ENCODE measurements at regions of chr6 and their contacts with region 1.

Region 1: DNA sequence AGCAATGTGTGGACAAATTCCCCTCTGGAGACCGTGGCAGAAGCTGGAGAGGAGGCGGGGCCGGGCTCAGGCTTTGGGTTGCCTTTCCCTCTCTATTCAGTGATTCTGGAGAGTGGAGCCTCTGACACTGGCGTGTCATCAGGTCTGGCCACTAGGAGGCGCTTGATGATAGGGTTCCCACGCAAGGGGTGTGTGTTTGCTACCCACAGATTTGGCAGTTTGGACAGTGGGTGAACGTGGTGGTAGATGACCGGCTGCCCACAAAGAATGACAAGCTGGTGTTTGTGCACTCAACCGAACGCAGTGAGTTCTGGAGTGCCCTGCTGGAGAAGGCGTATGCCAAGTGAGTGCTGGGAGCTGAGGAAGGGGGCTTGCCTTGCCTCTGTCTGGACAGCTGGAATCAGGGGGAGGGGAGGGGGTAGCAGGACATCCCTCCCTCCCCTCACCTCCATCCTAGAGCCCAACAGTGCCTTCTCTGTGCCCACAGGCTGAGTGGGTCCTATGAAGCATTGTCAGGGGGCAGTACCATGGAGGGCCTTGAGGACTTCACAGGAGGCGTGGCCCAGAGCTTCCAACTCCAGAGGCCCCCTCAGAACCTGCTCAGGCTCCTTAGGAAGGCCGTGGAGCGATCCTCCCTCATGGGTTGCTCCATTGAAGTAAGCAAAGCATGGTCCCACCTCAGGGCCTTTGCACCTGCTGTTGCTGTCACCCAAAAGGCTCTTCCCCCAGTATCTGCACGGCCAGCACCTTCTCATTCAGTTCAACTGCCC is 14.3 kb downstream of the CAPN11 start:
- DNase-seq: peak; percentile 62 to 87
- ATAC-seq: peak; percentile 94 to 97
- H3K4me3 ChIP-seq: no peak overlapping the region
- H3K27ac ChIP-seq: no peak overlapping the region
- H3K4me1 ChIP-seq: no peaks in the 10 kb centered on the region
- CTCF ChIP-seq: peak; percentile 72
- EP300 ChIP-seq: no peak
- POLR2A ChIP-seq: no peak
- RAD21 ChIP-seq: peak; percentile 82 to 89

Region 2: GRCh38 chr6:43817192-43817591 is 355.7 kb before region 1 on chr6:
- CTCF ChIA-PET with region 1: no interaction called
- POLR2A ChIA-PET with region 1: no interaction called
- DNase-seq: peak; percentile 62 to 66
- ATAC-seq: peak; percentile 97 to 100
- H3K4me3 ChIP-seq: no peak overlapping the region
- H3K27ac ChIP-seq: peak overlapping the region; percentile 63 to 80
- H3K4me1 ChIP-seq: peaks cover 5% of the 10 kb centered on the region; the same call in 2 of the 3 replicates
- CTCF ChIP-seq: peak; percentile 38; the same call in 2 of the 3 replicates
- EP300 ChIP-seq: no peak
- POLR2A ChIP-seq: no peak
- RAD21 ChIP-seq: peak; percentile 32 to 38; a peak in 2 of 5 replicates

Region 3: DNA sequence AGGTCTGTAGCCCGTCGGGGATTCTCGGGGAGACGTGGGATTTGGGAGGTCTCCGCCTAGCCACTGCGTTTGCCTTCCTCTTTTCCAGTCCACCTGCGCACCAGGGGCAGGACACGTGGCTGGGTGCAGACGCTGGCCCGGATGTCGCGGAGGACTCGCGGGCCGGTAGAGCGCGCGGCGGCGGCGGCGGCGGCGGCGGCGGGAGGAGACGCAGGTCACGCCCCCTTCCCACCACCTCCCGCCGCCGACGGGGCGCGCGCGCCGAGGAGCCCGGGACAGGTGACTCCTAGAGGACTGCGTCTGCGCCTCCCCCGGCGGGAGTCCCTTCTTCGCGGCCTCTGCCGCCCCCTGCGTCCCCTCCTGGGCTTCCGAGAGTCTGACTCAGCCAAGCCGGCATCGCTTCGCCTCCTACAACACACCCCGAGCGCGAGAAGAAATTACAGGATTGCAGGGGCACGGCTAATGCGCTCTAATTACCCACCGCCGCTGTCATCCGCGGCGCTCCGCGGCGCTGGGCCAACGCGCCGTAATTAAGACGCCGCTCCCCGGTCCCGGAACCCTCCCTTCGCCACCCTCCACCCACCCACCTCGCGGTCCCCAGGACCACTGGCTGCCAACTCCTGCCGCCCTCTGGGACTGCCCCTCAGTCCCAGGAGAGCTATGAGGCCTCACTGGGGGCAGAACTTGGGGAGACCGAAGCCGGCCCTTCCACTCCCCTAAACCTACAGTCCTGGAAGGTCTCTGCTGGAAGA is 170.1 kb before region 1 on chr6:
- CTCF ChIA-PET with region 1: no interaction called
- POLR2A ChIA-PET with region 1: no interaction called
- DNase-seq: peak; percentile 55 to 76
- ATAC-seq: peak; percentile 72
- H3K4me3 ChIP-seq: peak overlapping the region; percentile 60
- H3K27ac ChIP-seq: peak overlapping the region; percentile 100
- H3K4me1 ChIP-seq: peaks cover 68% of the 10 kb centered on the region
- CTCF ChIP-seq: no peak
- EP300 ChIP-seq: no peak
- POLR2A ChIP-seq: no peak; the same call in 1 of the 2 replicates
- RAD21 ChIP-seq: peak in 1 of 2 experiments; percentile 39; a peak in 3 of 5 replicates

Region 4: GRCh38 chr6:44086931-44087574 is 85.9 kb before region 1 on chr6:
- CTCF ChIA-PET with region 1: no interaction called
- POLR2A ChIA-PET with region 1: no interaction called
- DNase-seq: no peak
- ATAC-seq: peak in 1 of 2 experiments; percentile 36; a peak in 4 of 6 replicates
- H3K4me3 ChIP-seq: no peak overlapping the region
- H3K27ac ChIP-seq: no peak overlapping the region
- H3K4me1 ChIP-seq: no peaks in the 10 kb centered on the region
- CTCF ChIP-seq: no peak
- EP300 ChIP-seq: no peak
- POLR2A ChIP-seq: no peak
- RAD21 ChIP-seq: no peak

Region 5: GRCh38 chr6:44133003-44133931 is 39.6 kb before region 1 on chr6:
- CTCF ChIA-PET with region 1: interaction called, 12 read pairs
- POLR2A ChIA-PET with region 1: no interaction called
- DNase-seq: peak; percentile 35
- ATAC-seq: peak; percentile 93 to 95
- H3K4me3 ChIP-seq: no peak overlapping the region
- H3K27ac ChIP-seq: peak overlapping the region in 1 of 2 experiments; percentile 74; a peak in 3 of 6 replicates
- H3K4me1 ChIP-seq: peaks cover 16% of the 10 kb centered on the region; the same call in 2 of the 3 replicates
- CTCF ChIP-seq: no peak
- EP300 ChIP-seq: no peak
- POLR2A ChIP-seq: no peak
- RAD21 ChIP-seq: no peak

Region 6: GRCh38 chr6:44185953-44186634 is 13.2 kb after region 1 on chr6:
- CTCF ChIA-PET with region 1: interaction called, 17 read pairs
- POLR2A ChIA-PET with region 1: no interaction called
- DNase-seq: no peak
- ATAC-seq: no peak; a peak in 1 of 6 replicates
- H3K4me3 ChIP-seq: no peak overlapping the region
- H3K27ac ChIP-seq: no peak overlapping the region
- H3K4me1 ChIP-seq: no peaks in the 10 kb centered on the region
- CTCF ChIP-seq: no peak
- EP300 ChIP-seq: no peak
- POLR2A ChIP-seq: no peak
- RAD21 ChIP-seq: no peak

Region 7: GRCh38 chr6:44221291-44221960 is 48.5 kb after region 1 on chr6:
- CTCF ChIA-PET with region 1: interaction called, 11 read pairs
- POLR2A ChIA-PET with region 1: no interaction called
- DNase-seq: peak; percentile 60 to 87
- ATAC-seq: peak; percentile 47 to 77
- H3K4me3 ChIP-seq: no peak overlapping the region
- H3K27ac ChIP-seq: peak overlapping the region; percentile 67 to 98; a peak in 5 of 6 replicates
- H3K4me1 ChIP-seq: peaks cover 68% of the 10 kb centered on the region
- CTCF ChIP-seq: peak; percentile 45; the same call in 2 of the 3 replicates
- EP300 ChIP-seq: no peak
- POLR2A ChIP-seq: no peak
- RAD21 ChIP-seq: peak; percentile 47 to 52; a peak in 4 of 5 replicates

Region 8: DNA sequence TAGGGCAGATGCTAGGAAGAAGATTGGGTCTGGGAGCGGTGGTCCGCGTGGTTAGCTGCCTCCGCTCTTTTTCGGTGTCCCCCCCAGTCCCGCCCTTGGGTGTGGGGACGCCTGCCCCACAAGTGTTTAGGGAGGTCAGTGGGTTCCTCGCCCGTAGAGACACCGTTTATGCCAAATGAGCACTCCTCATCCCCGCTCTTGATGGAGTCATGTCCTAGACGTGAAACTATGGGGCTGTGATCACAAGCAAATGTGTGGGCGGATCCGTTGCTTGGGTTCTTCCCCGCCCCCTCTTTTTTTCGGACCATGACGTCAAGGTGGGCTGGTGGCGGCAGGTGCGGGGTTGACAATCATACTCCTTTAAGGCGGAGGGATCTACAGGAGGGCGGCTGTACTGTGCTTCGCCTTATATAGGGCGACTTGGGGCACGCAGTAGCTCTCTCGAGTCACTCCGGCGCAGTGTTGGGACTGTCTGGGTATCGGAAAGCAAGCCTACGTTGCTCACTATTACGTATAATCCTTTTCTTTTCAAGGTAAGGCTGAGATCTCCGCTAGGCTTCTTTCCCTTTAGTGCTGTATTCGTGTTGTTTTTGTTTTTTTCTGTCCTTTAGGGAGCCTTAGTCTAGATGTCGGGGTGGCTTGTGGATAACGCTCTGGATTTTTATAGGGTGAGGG is 73.9 kb after region 1 on chr6 and contains the start of gene HSP90AB1:
- CTCF ChIA-PET with region 1: interaction called, 13 read pairs
- POLR2A ChIA-PET with region 1: interaction called, 5 read pairs
- DNase-seq: peak; percentile 72 to 99
- ATAC-seq: peak; percentile 68 to 77
- H3K4me3 ChIP-seq: peak within 1 kb of the TSS; percentile 90
- H3K27ac ChIP-seq: peak within 1 kb of the TSS; percentile 95 to 99
- H3K4me1 ChIP-seq: peaks cover 38% of the 10 kb centered on the region
- CTCF ChIP-seq: no peak
- EP300 ChIP-seq: no peak
- POLR2A ChIP-seq: peak; percentile 94
- RAD21 ChIP-seq: no peak
- polyA plus RNA-seq, gene HSP90AB1: 1,080 and 1,155 TPM in 2 replicates

Region 9: DNA sequence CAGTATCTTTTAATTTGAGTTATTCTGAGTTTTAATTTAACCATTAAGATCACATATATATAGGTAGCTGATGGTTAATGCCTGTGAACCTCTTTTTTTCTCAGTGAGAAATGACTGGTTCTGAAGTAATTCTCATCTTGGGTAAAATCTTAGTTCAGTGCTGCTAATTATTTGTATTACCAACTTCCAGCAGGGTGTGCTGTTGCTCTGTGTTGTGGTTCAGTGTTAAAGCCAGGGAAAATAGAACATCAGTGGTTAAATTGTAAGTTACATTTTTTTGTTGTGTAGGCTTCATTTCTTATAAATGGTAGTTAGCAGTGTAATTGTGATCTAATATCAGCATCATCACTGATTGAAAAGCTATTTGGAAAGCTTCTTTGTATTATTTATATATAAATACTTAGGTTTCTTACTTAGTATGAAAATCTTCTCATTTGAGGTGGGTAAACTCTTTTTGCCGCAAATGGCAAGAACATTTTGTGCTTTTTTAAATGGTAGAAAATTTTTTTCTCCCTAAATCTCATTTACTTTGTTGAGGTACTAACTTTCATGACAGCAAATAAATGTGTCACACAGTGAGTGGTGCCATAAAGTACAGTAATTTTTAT is 258.3 kb after region 1 on chr6:
- CTCF ChIA-PET with region 1: no interaction called
- POLR2A ChIA-PET with region 1: no interaction called
- DNase-seq: peak; percentile 19 to 46
- ATAC-seq: peak; percentile 59 to 84; a peak in 5 of 6 replicates
- H3K4me3 ChIP-seq: no peak overlapping the region
- H3K27ac ChIP-seq: no peak overlapping the region
- H3K4me1 ChIP-seq: 0 out of 3 replicates have a peak, but pooled peaks cover 3% of the 10 kb centered on the region
- CTCF ChIP-seq: peak; percentile 66
- EP300 ChIP-seq: no peak
- POLR2A ChIP-seq: no peak
- RAD21 ChIP-seq: peak; percentile 64 to 66